HEK293T (cell line): ENCODE measurements at regions of chr1 and their contacts with region 1.

Region 1: GRCh38 chr1:205430696-205431305 is 8.9 kb upstream of the LEMD1 start:
- DNase-seq: peak; percentile 84

Region 2: DNA sequence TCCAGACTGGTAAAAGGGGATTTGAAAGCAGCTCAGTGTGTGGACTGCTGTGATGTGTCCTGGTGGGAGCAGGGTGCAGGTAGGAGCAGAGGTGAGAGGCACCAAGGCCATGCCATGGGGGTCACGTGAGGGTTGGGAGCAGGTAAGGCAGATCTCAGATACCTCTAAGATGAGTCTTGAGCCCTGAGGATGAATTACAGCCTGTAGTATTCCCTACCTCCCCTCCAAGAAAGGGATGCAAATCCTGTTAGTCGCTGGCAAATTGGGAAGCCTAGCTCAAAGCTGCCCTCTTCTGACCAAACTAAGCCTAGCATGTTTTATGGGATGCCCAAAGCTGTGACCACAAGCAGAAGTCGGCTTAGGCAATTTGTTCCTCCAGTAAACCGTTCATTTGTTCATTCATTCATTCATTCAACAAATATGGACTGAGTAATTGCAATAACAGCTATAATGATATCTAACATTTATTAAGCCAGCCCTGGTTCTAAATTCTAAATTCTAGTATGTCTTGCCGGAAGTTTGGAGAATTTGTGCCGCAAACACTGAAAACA is 105.4 kb before region 1 on chr1:
- CTCF ChIA-PET with region 1: no interaction called
- POLR2A ChIA-PET with region 1: no interaction called
- DNase-seq: peak; percentile 77

Region 3: GRCh38 chr1:205449750-205450443 is 19.1 kb after region 1 on chr1:
- CTCF ChIA-PET with region 1: interaction called, 11 read pairs
- POLR2A ChIA-PET with region 1: no interaction called
- DNase-seq: no peak